Activated naive CD4-positive, alpha-beta T cell treated with anti-CD3 and anti-CD28 coated beads for 36 hours (primary cell): ENCODE measurements at regions of chr5 and their contacts with region 1.

Region 1: DNA sequence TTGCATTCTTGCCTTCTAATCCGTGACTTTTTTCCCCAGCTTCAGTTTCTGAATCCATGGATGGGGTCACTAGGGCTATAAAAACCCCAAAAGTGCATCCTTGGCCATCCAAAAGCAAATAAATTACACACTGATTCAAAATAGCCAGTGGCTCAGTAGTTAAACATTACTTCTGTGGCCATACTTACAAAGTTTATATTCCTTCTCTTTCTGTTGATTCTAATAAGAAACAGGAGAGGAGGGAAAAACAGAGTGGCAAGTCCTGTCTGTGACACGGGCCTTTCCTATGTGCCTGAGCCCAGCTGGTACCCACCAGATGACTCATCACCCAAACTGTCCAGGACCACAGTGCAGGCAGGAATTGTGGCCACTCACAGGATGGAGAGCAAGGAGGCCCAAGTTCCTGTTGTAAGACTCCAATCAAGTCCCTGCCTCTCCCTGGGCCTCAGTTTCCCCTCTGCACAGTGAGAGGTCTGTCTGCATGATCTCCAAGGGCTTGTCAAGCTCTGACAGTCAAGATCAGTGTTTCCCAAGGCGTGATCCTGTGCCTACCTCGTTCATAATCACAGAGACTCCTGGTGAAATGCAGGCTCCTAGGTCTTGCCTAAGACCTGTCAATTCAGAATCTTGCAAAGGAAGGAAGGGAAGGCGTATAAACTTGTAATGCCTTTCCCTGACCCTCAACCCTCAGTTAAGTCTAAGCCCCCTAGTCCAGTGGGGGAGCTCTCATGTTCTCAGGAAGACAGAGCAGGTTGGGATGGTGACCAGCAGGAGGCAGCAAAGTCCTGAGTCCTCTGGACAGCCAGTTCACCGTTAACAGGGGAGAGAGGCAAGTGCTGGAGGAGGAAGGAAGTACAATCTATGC is 29.5 kb downstream of the TNIP1 start:
- DNase-seq: peak; percentile 85
- H3K4me3 Mint-ChIP-seq: no peak overlapping the region
- H3K27ac Mint-ChIP-seq: peak overlapping the region; percentile 16
- H3K4me1 Mint-ChIP-seq: no peaks in the 10 kb centered on the region
- H3K27me3 Mint-ChIP-seq: no peaks in the 10 kb centered on the region

Region 2: GRCh38 chr5:150112261-150113046 is 938.8 kb before region 1 on chr5:
- CTCF ChIA-PET with region 1: no interaction called
- intact Hi-C with region 1: no loop called
- DNase-seq: no peak
- H3K4me3 Mint-ChIP-seq: no peak overlapping the region
- H3K27ac Mint-ChIP-seq: no peak overlapping the region
- H3K4me1 Mint-ChIP-seq: no peaks in the 10 kb centered on the region
- H3K27me3 Mint-ChIP-seq: no peaks in the 10 kb centered on the region

Region 3: GRCh38 chr5:151040211-151040747 is 11.0 kb before region 1 on chr5:
- CTCF ChIA-PET with region 1: interaction called, 11 read pairs
- intact Hi-C with region 1: no loop called
- DNase-seq: no peak
- H3K4me3 Mint-ChIP-seq: no peak overlapping the region
- H3K27ac Mint-ChIP-seq: no peak overlapping the region
- H3K4me1 Mint-ChIP-seq: peaks cover 11% of the 10 kb centered on the region
- H3K27me3 Mint-ChIP-seq: no peaks in the 10 kb centered on the region

Region 4: DNA sequence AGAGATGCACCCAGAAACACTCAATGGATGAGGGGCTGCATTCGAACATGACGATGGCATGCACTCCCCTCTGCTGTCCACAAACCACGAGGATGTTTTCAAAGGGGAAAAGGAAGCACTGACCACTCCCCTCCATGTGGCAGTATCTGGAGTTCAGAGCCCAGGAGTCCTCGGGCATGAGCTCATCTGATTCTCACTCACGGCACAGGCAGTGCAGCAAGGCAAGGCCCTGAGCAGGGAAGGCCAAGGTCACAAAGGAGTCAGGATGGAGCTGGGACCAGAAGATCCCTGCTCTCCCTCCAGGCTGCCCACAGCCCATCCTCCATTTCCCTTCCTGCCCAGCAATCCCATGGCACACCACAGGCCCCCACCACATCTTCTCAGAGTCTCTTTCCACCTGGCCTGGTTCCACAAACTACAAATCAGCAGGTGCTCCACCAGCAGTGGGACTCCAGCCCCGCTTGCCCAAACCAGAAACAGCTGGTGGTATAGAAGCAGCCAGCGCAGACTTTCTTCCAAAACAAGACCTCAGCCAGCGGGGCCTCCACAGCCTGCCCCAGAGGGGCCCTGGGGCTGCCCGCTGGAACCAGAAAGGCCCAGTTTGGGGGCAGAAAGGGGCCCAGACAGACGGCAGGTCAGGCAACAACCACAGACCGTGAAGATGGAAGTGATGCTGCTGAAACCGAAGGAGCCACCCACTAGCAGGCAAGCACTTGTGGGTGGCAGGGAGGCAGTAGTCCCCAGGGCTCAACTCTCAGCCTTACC is 17.3 kb after region 1 on chr5:
- CTCF ChIA-PET with region 1: interaction called, 10 read pairs
- intact Hi-C with region 1: no loop called
- DNase-seq: peak; percentile 46
- H3K4me3 Mint-ChIP-seq: peak overlapping the region; percentile 12
- H3K27ac Mint-ChIP-seq: peak overlapping the region; percentile 77
- H3K4me1 Mint-ChIP-seq: peaks cover 93% of the 10 kb centered on the region
- H3K27me3 Mint-ChIP-seq: no peaks in the 10 kb centered on the region

Region 5: GRCh38 chr5:151094054-151094851 is 43.0 kb after region 1 on chr5:
- CTCF ChIA-PET with region 1: interaction called, 36 read pairs
- intact Hi-C with region 1: no loop called
- DNase-seq: peak; percentile 76
- H3K4me3 Mint-ChIP-seq: peak overlapping the region; percentile 8
- H3K27ac Mint-ChIP-seq: peak overlapping the region; percentile 86
- H3K4me1 Mint-ChIP-seq: peaks cover 68% of the 10 kb centered on the region
- H3K27me3 Mint-ChIP-seq: no peaks in the 10 kb centered on the region

Region 6: DNA sequence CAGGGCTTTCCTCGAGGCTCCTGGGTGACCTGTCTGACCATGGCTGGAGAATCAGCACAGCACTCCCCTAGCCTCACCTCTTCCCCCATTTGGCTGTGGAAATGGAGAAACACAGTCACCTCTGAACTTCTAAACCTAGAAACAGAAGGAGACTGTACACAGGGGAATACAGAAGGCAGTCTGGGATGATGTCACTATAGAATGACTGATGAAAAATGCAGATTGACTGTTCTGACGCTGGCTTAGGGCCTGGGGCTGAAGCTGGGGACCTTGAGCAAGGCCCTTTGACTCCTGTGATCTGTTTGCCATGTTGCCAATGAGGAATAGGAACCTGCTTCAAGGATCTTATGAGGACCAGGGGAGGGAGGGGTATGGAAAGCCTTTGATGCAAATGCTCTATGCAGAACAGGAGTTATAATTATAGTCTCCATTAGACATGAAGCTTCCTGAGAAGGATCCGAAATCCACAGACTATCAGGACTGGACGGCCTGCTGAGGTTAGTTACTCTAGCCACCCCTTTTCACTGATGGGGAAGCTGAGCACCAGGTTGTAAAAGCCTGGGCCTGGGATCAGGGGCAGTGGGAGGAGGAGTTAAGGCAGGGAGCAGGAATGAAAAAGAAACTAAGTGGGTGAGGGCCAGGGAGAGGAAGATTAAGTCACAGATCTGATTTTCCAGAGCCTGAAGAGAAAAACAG is 130.7 kb after region 1 on chr5:
- CTCF ChIA-PET with region 1: no interaction called
- intact Hi-C with region 1: no loop called
- DNase-seq: no peak
- H3K4me3 Mint-ChIP-seq: no peak overlapping the region
- H3K27ac Mint-ChIP-seq: peak overlapping the region; percentile 47
- H3K4me1 Mint-ChIP-seq: peaks cover 15% of the 10 kb centered on the region
- H3K27me3 Mint-ChIP-seq: no peaks in the 10 kb centered on the region